ENCODE measurements at regions of chr6 and their contacts with region 1.

Region 1: GRCh38 chr6:63635588-63636517 is at the start of gene PHF3:
- DNase-seq: peak; percentile 95
- ATAC-seq: peak; percentile 94
- H3K4me3 Mint-ChIP-seq: peak within 1 kb of the TSS; percentile 99
- H3K27ac Mint-ChIP-seq: peak within 1 kb of the TSS; percentile 99
- H3K4me1 Mint-ChIP-seq: peaks cover 37% of the 10 kb centered on the region
- H3K27me3 Mint-ChIP-seq: no peaks in the 10 kb centered on the region
- total RNA-seq, gene PHF3: 50.5 to 56.5 TPM

Region 2: GRCh38 chr6:63571881-63572732 is 63.7 kb before region 1 on chr6 and contains the starts of genes LOC128125822 and PTP4A1:
- CTCF ChIA-PET with region 1: interaction called, 4 read pairs
- POLR2A ChIA-PET with region 1: interaction called, 4 read pairs
- intact Hi-C with region 1: loop called (anchors 1 kb)
- DNase-seq: peak; percentile 98
- ATAC-seq: peak; percentile 93
- H3K4me3 Mint-ChIP-seq: peak within 1 kb of the TSS; percentile 95
- H3K27ac Mint-ChIP-seq: peak within 1 kb of the TSS; percentile 98
- H3K4me1 Mint-ChIP-seq: peaks cover 29% of the 10 kb centered on the region
- H3K27me3 Mint-ChIP-seq: no peaks in the 10 kb centered on the region
- total RNA-seq, gene PTP4A1: 42.6 to 51.9 TPM

Region 3: DNA sequence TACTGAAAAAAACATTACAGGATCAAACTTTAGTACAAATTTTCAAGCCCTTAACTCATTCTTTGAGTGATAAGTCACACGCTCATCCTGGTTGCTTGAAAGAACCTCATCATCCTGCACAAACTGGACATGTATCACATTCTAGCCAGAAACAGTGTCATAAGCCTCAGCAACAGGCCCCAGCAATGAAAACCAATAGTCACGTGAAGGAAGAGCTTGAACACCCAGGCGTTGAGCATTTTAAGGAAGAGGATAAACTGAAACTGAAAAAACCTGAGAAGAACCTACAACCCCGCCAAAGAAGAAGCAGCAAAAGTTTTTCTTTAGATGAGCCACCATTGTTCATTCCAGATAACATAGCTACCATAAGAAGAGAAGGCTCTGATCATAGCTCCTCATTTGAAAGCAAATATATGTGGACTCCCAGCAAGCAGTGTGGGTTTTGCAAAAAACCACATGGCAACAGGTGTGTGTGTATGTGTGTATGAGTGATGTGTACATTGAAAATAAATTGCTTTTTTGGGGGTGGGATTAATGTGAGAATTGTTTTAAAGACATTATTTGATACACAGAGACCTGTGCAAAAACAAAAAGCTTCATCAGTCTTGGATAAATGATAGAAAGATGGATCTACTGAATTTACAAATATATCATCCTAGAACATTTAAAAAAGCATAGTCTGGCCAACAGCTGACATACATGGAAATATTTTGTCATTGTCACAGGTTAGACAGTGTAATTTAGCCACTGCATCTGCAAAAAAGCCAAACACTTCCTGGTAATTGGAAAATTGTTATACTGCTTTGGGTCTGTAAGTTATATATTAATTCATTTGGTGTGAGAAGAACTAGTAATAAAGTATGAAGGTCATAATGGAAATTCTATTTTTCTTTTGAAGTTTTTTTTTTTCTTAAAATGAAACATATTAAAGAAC is 49.9 kb after region 1 on chr6:
- CTCF ChIA-PET with region 1: interaction called, 3 read pairs
- POLR2A ChIA-PET with region 1: no interaction called
- intact Hi-C with region 1: loop called in 1 of 2 experiments (anchors 5 kb)
- DNase-seq: no peak
- ATAC-seq: peak; percentile 23
- H3K4me3 Mint-ChIP-seq: no peak overlapping the region
- H3K27ac Mint-ChIP-seq: peak overlapping the region; percentile 15
- H3K4me1 Mint-ChIP-seq: peaks cover 29% of the 10 kb centered on the region
- H3K27me3 Mint-ChIP-seq: no peaks in the 10 kb centered on the region